SK-N-SH (cell line): ENCODE measurements at regions of chr6 and their contacts with region 1.

Region 1: GRCh38 chr6:26249957-26250697 is 114.9 kb upstream of the BTN3A2 start:
- DNase-seq: peak; percentile 58
- H3K4me3 ChIP-seq: peak overlapping the region; percentile 88 to 92
- H3K27ac ChIP-seq: peak overlapping the region; percentile 85 to 97
- H3K4me1 ChIP-seq: peaks cover 0 to 7% of the 10 kb centered on the region in 2 experiments; a peak in 3 of 4 replicates
- H3K27me3 ChIP-seq: no peaks in the 10 kb centered on the region
- CTCF ChIP-seq: peak; percentile 54
- EP300 ChIP-seq: 0 out of 4 replicates have a peak, but pooled peaks of 1 of the 2 experiments have one; percentile 12
- RAD21 ChIP-seq: no peak; the same call in 1 of the 2 replicates

Region 2: DNA sequence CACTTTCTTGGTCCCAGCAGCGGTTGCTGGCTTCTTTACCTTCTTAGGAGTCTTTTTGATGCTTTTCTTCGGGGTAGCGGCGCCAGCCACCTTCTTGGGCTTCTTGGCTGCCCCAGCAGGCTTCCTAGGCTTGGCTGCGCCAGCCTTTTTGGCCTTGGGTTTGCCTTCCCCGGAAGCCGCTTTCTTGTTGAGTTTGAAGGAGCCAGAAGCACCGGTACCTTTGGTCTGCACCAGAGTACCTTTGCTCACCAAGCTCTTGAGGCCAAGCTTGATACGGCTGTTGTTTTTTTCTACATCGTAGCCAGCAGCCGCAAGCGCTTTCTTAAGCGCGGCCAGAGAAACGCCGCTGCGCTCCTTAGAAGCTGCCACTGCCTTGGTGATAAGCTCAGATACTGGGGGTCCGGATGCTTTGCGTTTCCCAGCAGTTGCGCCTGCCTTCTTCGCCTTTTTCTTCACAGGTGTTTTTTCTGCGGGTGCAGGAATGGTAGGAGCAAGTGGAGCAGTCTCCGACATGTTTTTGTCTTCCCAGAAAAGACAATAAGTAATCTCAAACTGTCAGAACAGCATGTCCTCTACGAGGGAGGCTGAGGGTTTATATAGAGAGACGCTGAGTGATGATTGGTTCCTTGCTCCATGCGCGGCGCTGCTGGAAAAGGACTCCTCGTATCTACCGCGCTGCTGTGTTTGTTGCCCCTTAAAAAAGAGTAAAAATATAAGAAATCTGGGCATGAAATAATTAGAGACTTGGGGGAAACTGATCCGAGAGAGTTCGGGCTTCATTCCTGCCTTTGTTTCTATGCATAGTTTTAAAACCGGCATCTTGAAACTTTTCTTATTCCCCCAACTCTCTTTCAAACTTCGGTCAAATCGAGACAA is 15.5 kb before region 1 on chr6:
- CTCF ChIA-PET with region 1: interaction called, 11 read pairs
- POLR2A ChIA-PET with region 1: interaction called, 120 read pairs
- DNase-seq: peak; percentile 73
- H3K4me3 ChIP-seq: peak overlapping the region; percentile 61 to 72
- H3K27ac ChIP-seq: peak overlapping the region; percentile 77 to 85
- H3K4me1 ChIP-seq: peaks cover 0 to 3% of the 10 kb centered on the region in 2 experiments; a peak in 3 of 4 replicates
- H3K27me3 ChIP-seq: no peaks in the 10 kb centered on the region
- CTCF ChIP-seq: no peak
- EP300 ChIP-seq: peak in 1 of 2 experiments; percentile 52; a peak in 1 of 4 replicates
- RAD21 ChIP-seq: no peak